ENCODE measurements at regions of chr19 and their contacts with region 1.

Region 1: GRCh38 chr19:44723952-44724319 is 24.6 kb upstream of the BCL3 start:
- DNase-seq: peak; percentile 85

Region 2: GRCh38 chr19:44607049-44607448 is 116.9 kb before region 1 on chr19:
- CTCF ChIA-PET with region 1: no interaction called
- POLR2A ChIA-PET with region 1: no interaction called
- DNase-seq: no peak

Region 3: DNA sequence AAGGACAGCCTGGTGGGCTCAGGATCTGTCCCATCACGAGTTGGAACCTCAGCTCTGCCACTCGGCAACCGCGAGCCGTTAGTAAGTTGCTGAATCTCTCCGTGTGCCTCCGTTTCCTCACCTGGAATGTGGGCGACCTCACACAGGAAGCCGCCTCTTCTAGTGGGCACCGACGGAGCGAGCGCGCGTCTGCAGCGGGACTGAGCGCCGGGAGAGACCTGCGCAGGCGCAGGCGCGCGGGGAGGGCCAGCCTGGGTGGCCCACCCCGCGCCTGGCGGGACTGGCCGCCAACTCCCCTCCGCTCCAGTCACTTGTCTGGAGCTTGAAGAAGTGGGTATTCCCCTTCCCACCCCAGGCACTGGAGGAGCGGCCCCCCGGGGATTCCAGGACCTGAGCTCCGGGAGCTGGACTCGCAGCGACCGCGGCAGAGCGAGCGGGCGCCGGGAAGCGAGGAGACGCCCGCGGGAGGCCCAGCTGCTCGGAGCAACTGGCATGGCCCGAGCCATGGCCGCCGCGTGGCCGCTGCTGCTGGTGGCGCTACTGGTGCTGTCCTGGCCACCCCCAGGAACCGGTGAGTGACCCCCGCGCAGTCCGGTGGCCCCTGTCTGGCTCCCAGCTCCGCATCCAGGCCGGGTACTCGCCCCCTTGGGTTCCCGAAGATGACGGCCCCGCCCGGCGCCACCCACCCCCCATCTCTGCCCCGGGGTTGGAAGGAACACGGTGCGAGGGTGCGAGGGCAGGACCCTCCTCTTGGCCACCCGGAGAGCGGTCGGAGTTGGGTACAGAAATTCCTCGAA is 80.1 kb before region 1 on chr19 and contains the start of gene PVR:
- CTCF ChIA-PET with region 1: no interaction called
- POLR2A ChIA-PET with region 1: no interaction called
- DNase-seq: peak; percentile 90

Region 4: GRCh38 chr19:44764975-44765948 is 41.3 kb after region 1 on chr19:
- CTCF ChIA-PET with region 1: interaction called, 77 read pairs
- POLR2A ChIA-PET with region 1: interaction called, 11 read pairs
- DNase-seq: no peak

Region 5: DNA sequence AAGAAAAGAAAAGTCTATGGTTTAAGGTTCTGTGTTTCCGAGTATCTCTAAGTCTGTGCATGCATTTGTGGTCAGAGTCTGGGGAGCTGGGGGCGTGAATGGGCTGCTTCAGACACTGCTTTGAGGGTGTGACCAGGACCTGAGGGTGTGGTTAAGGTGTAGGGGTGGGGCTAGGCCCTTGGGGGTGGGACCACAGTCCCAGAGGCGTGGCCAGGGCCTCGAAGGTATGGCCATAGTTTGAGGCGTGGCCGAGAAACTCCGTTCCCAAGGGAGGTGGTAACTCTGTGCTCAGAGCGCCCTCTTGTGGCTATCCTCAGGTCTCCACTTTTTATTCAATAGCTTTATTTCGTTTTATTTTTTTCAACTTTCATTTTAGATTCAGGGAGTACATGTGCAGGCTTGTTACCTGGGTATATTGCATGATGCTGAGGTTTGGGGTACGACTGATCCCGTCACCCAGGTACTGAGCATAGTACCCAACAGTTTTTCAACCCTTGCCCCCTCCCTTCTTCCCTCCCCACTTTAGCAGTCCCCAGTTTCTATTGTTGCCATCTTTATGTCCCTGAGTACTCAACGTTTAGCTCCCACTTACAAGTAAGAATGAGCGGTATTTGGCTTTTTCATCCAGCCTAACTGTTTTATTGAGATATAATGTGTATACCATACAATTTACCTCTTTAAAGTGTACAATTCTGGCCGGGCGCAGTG is 46.8 kb after region 1 on chr19:
- CTCF ChIA-PET with region 1: interaction called, 77 read pairs
- POLR2A ChIA-PET with region 1: interaction called, 11 read pairs
- DNase-seq: peak; percentile 99

Region 6: GRCh38 chr19:44820648-44821609 is 97.0 kb after region 1 on chr19:
- CTCF ChIA-PET with region 1: no interaction called
- POLR2A ChIA-PET with region 1: no interaction called
- DNase-seq: peak; percentile 4

Measured in HEK293T (cell line).